CD4-positive, alpha-beta T cell (primary cell): ENCODE measurements at regions of chr3 and their contacts with region 1.

Region 1: GRCh38 chr3:141738022-141738890 is at the start of gene RNF7:
- DNase-seq: peak; percentile 94 to 99 (median 97)
- ATAC-seq: peak; percentile 91
- H3K4me3 ChIP-seq: peak within 1 kb of the TSS; percentile 91
- H3K4me3 Mint-ChIP-seq: peak within 1 kb of the TSS; percentile 100
- H3K27ac ChIP-seq: peak within 1 kb of the TSS; percentile 81 to 86
- H3K27ac Mint-ChIP-seq: peak within 1 kb of the TSS; percentile 99
- H3K4me1 ChIP-seq: peaks cover 19% of the 10 kb centered on the region
- H3K4me1 Mint-ChIP-seq: peaks cover 47% of the 10 kb centered on the region
- H3K27me3 ChIP-seq: no peaks in the 10 kb centered on the region
- H3K27me3 Mint-ChIP-seq: no peaks in the 10 kb centered on the region
- CTCF ChIP-seq: peak; percentile 86
- total RNA-seq, gene RNF7: 60.7 to 65.7 TPM

Region 2: GRCh38 chr3:141311496-141312353 is 426.5 kb before region 1 on chr3:
- CTCF ChIA-PET with region 1: no interaction called
- POLR2A ChIA-PET with region 1: interaction called, 3 read pairs
- intact Hi-C with region 1: loop called in 1 of 2 experiments (anchors 5 kb)
- DNase-seq: peak; percentile 93 to 99 (median 97)
- ATAC-seq: peak; percentile 88
- H3K4me3 ChIP-seq: peak overlapping the region; percentile 86
- H3K4me3 Mint-ChIP-seq: peak overlapping the region; percentile 97
- H3K27ac ChIP-seq: peak overlapping the region; percentile 62 to 75
- H3K27ac Mint-ChIP-seq: peak overlapping the region; percentile 92
- H3K4me1 ChIP-seq: peaks cover 48% of the 10 kb centered on the region
- H3K4me1 Mint-ChIP-seq: peaks cover 67% of the 10 kb centered on the region
- H3K27me3 ChIP-seq: no peaks in the 10 kb centered on the region
- H3K27me3 Mint-ChIP-seq: no peaks in the 10 kb centered on the region
- CTCF ChIP-seq: peak; percentile 65

Region 3: GRCh38 chr3:141575879-141576743 is 162.1 kb before region 1 on chr3:
- CTCF ChIA-PET with region 1: no interaction called
- POLR2A ChIA-PET with region 1: no interaction called
- intact Hi-C with region 1: loop called (anchors 5 to 10 kb)
- DNase-seq: peak in 3 of 14 experiments; percentile 32 to 48 (median 38)
- ATAC-seq: peak; percentile 88
- H3K4me3 ChIP-seq: no peak overlapping the region
- H3K4me3 Mint-ChIP-seq: peak overlapping the region; percentile 7
- H3K27ac ChIP-seq: no peak overlapping the region
- H3K27ac Mint-ChIP-seq: peak overlapping the region; percentile 55
- H3K4me1 ChIP-seq: no peaks in the 10 kb centered on the region
- H3K4me1 Mint-ChIP-seq: peaks cover 15% of the 10 kb centered on the region
- H3K27me3 ChIP-seq: no peaks in the 10 kb centered on the region
- H3K27me3 Mint-ChIP-seq: no peaks in the 10 kb centered on the region
- CTCF ChIP-seq: peak; percentile 30

Region 4: GRCh38 chr3:141875374-141875892 is 137.2 kb after region 1 on chr3:
- CTCF ChIA-PET with region 1: interaction called, 38 read pairs
- POLR2A ChIA-PET with region 1: interaction called, 104 read pairs
- intact Hi-C with region 1: loop called (anchors 1 kb)
- DNase-seq: peak; percentile 71 to 91 (median 78)
- ATAC-seq: peak; percentile 65
- H3K4me3 ChIP-seq: peak overlapping the region; percentile 83
- H3K4me3 Mint-ChIP-seq: peak overlapping the region; percentile 92
- H3K27ac ChIP-seq: peak overlapping the region; percentile 90 to 98
- H3K27ac Mint-ChIP-seq: peak overlapping the region; percentile 93
- H3K4me1 ChIP-seq: peaks cover 11% of the 10 kb centered on the region
- H3K4me1 Mint-ChIP-seq: peaks cover 29% of the 10 kb centered on the region
- H3K27me3 ChIP-seq: no peaks in the 10 kb centered on the region
- H3K27me3 Mint-ChIP-seq: no peaks in the 10 kb centered on the region
- CTCF ChIP-seq: peak; percentile 90

Region 5: GRCh38 chr3:142148792-142149672 is 410.8 kb after region 1 on chr3 and contains the start of gene TFDP2:
- CTCF ChIA-PET with region 1: no interaction called
- POLR2A ChIA-PET with region 1: no interaction called
- intact Hi-C with region 1: loop called in 1 of 2 experiments (anchors 10 kb)
- DNase-seq: peak; percentile 66 to 92 (median 81)
- ATAC-seq: peak; percentile 99
- H3K4me3 ChIP-seq: peak within 1 kb of the TSS; percentile 70
- H3K4me3 Mint-ChIP-seq: peak within 1 kb of the TSS; percentile 97
- H3K27ac ChIP-seq: peak within 1 kb of the TSS in 1 of 2 donors; percentile 16
- H3K27ac Mint-ChIP-seq: peak within 1 kb of the TSS; percentile 77
- H3K4me1 ChIP-seq: peaks cover 16% of the 10 kb centered on the region
- H3K4me1 Mint-ChIP-seq: peaks cover 33% of the 10 kb centered on the region
- H3K27me3 ChIP-seq: no peaks in the 10 kb centered on the region
- H3K27me3 Mint-ChIP-seq: no peaks in the 10 kb centered on the region
- CTCF ChIP-seq: no peak
- total RNA-seq, gene TFDP2: 33.1 to 34.2 TPM

Region 6: DNA sequence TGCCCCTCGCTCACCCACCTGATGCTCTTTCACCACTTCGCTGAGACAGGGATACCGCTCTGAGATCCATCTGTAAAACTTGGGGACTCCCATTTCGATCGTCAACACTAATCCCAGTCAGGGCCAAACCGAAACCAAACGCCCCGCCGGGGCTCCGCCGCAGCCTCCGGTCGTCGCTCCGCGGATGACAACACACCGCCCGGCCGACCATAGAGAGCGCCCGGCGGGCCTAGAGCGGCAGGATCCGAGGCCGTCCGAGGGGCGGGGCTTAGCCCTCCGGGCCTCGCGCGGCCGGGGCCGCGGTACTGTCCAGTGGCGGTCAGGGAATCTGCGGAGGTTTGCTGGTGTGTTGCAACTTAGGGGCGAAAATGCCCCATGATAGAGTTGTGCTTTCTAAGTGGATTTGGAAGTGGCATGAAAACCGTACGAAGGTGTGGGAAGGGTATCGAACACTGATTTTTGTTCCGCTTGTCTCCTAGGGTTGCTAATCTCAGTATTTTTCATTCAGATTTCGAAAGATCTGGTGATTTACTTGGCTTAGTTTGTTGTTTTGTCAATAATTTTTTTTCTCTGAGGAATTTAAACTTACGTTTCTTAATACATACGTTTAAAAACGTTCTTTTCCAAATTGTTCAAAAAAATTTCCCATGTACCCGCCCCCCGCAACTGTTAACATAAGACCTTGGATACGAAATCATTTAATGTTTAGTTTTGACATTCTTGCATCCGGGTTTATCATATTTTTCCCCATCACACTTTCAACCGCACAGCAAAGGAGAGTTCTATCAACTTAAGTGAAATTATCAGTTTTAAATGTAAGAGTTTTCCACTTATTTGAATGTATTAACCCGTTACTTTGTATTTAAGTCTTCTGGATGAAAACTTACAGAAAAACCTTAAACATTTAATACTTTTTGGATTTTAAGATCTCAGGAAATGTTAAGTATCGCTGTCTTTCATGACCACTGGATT is 709.9 kb after region 1 on chr3 and contains the start of gene XRN1:
- CTCF ChIA-PET with region 1: interaction called, 3 read pairs
- POLR2A ChIA-PET with region 1: interaction called, 5 read pairs
- intact Hi-C with region 1: loop called in 1 of 2 experiments (anchors 5 kb)
- DNase-seq: peak; percentile 89 to 97 (median 94)
- ATAC-seq: peak; percentile 94
- H3K4me3 ChIP-seq: peak within 1 kb of the TSS; percentile 85
- H3K4me3 Mint-ChIP-seq: peak within 1 kb of the TSS; percentile 95
- H3K27ac ChIP-seq: peak within 1 kb of the TSS; percentile 97 to 98
- H3K27ac Mint-ChIP-seq: peak within 1 kb of the TSS; percentile 99
- H3K4me1 ChIP-seq: peaks cover 16% of the 10 kb centered on the region
- H3K4me1 Mint-ChIP-seq: peaks cover 58% of the 10 kb centered on the region
- H3K27me3 ChIP-seq: no peaks in the 10 kb centered on the region
- H3K27me3 Mint-ChIP-seq: no peaks in the 10 kb centered on the region
- CTCF ChIP-seq: no peak
- total RNA-seq, gene XRN1: 85.7 to 97.6 TPM